ENCODE measurements at regions of chrX and their contacts with region 1.

Region 1: GRCh38 chrX:49878834-49879659 is at the start of gene USP27X:
- DNase-seq: peak; percentile 78
- H3K4me3 Mint-ChIP-seq: peak within 1 kb of the TSS; percentile 74
- H3K27ac Mint-ChIP-seq: peak within 1 kb of the TSS; percentile 65
- H3K4me1 Mint-ChIP-seq: peaks cover 34% of the 10 kb centered on the region
- H3K27me3 Mint-ChIP-seq: no peaks in the 10 kb centered on the region
- total RNA-seq, gene USP27X: 2.0 TPM

Region 2: GRCh38 chrX:49748211-49748956 is 130.7 kb before region 1 on chrX:
- CTCF ChIA-PET with region 1: no interaction called
- POLR2A ChIA-PET with region 1: no interaction called
- intact Hi-C with region 1: no loop called
- DNase-seq: no peak
- H3K4me3 Mint-ChIP-seq: no peak overlapping the region
- H3K27ac Mint-ChIP-seq: no peak overlapping the region
- H3K4me1 Mint-ChIP-seq: no peaks in the 10 kb centered on the region
- H3K27me3 Mint-ChIP-seq: peaks cover 2% of the 10 kb centered on the region

Region 3: DNA sequence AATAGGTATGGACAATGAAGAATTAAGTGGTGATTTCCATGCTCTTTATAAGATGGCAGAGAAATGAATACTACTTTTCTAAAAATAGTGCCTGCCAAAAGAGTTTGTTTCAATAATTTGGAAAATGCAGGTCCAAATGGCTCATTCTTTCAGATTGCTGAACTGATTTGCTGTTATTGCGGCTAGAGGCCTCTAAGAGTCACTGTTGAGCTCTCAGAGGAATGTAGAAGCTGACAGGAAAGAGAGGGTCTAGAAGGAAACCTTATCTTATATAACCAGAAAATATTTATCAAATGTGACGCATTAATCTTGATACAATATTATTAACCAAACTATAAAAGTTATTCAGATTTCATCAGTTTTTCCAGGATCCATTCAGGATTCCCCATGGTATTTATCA is 117.6 kb before region 1 on chrX:
- CTCF ChIA-PET with region 1: no interaction called
- POLR2A ChIA-PET with region 1: no interaction called
- intact Hi-C with region 1: loop called (anchors 5 kb)
- DNase-seq: peak; percentile 9
- H3K4me3 Mint-ChIP-seq: no peak overlapping the region
- H3K27ac Mint-ChIP-seq: no peak overlapping the region
- H3K4me1 Mint-ChIP-seq: no peaks in the 10 kb centered on the region
- H3K27me3 Mint-ChIP-seq: no peaks in the 10 kb centered on the region

Region 4: DNA sequence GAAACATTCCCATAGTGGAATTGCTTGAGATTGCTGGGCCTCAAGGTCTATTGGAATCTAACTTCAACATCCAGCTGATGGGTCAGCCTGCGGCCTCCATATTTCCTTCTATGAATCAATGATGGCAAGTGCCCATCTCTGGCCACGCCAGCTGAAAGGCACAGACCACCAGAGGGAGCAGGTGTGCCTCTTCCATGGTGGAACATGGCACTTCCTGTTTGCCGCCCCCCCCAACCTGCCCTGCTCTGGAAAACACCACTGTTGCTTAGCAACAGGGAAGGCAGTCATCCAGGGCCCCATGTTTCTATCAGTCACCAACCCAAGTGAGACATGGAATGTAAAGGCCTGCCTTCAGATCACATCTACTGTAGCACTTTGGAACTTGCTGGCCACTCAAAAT is 38.4 kb before region 1 on chrX:
- CTCF ChIA-PET with region 1: interaction called, 3 read pairs
- POLR2A ChIA-PET with region 1: no interaction called
- intact Hi-C with region 1: loop called (anchors 1 kb)
- DNase-seq: peak; percentile 69
- H3K4me3 Mint-ChIP-seq: no peak overlapping the region
- H3K27ac Mint-ChIP-seq: no peak overlapping the region
- H3K4me1 Mint-ChIP-seq: peaks cover 5% of the 10 kb centered on the region
- H3K27me3 Mint-ChIP-seq: no peaks in the 10 kb centered on the region

Region 5: DNA sequence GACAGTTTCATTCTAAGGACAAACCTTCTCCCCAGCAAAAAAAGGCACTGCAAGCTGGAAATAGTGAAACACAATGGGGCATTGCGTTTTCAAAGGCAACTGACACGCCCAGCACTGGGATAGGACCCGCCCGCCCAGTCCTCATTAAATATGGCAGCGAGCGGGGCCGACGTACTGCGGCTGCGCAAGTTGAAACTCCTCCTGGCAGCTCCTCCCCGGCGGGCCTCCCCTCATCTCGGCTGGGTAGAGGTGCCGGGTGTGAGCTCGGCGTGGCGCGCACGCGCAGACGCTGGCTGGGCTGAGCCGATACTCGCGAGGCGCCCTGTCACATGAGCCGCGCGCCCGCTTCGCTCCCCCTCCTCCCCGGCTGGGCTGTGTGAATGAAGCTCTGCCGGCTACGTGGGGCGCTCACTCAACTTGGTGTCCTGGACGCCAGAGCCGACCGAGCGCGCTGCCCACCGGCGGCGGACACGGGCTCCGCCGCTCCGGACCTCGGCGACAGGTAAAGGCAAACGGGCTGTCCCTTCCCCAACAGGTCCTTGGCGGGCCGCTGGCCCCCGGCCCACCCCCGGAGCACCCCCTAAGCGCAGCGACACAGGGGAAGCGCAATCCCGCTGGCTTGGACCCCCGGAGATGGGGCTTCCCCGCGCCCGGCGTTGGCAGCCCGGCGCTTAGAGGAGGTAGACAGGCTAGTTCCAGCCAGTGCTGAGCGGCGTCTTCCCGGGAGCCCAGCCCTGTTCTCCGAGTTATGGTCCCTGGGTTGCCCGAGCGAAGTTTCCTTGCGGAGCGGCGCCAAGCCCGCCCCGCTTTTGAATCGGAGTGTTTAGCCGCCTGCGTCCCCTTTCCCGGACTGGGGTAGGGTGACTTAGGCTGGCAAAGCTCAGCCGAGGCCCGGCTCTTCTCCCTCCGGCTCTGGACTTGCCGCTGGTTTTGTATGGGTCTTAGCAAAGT is 43.5 kb after region 1 on chrX and contains the start of gene CLCN5:
- CTCF ChIA-PET with region 1: interaction called, 41 read pairs
- POLR2A ChIA-PET with region 1: no interaction called
- intact Hi-C with region 1: loop called (anchors 1 kb)
- DNase-seq: peak; percentile 95
- H3K4me3 Mint-ChIP-seq: peak within 1 kb of the TSS; percentile 71
- H3K27ac Mint-ChIP-seq: peak within 1 kb of the TSS; percentile 49
- H3K4me1 Mint-ChIP-seq: peaks cover 12% of the 10 kb centered on the region
- H3K27me3 Mint-ChIP-seq: no peaks in the 10 kb centered on the region
- total RNA-seq, gene CLCN5: 2.5 to 2.9 TPM

Measured in activated CD4-positive, alpha-beta memory T cell treated with anti-CD3 and anti-CD28 coated beads for 36 hours (primary cell).